PC-9 (cell line): ENCODE measurements at regions of chr15 and their contacts with region 1.

Region 1: GRCh38 chr15:25611603-25612002 is 172.8 kb upstream of the UBE3A start:
- DNase-seq: no peak
- H3K4me3 ChIP-seq: no peak overlapping the region
- H3K27ac ChIP-seq: no peak overlapping the region
- H3K4me1 ChIP-seq: no peaks in the 10 kb centered on the region
- H3K27me3 ChIP-seq: no peaks in the 10 kb centered on the region; the same call in 1 of the 2 replicates
- CTCF ChIP-seq: no peak

Region 2: DNA sequence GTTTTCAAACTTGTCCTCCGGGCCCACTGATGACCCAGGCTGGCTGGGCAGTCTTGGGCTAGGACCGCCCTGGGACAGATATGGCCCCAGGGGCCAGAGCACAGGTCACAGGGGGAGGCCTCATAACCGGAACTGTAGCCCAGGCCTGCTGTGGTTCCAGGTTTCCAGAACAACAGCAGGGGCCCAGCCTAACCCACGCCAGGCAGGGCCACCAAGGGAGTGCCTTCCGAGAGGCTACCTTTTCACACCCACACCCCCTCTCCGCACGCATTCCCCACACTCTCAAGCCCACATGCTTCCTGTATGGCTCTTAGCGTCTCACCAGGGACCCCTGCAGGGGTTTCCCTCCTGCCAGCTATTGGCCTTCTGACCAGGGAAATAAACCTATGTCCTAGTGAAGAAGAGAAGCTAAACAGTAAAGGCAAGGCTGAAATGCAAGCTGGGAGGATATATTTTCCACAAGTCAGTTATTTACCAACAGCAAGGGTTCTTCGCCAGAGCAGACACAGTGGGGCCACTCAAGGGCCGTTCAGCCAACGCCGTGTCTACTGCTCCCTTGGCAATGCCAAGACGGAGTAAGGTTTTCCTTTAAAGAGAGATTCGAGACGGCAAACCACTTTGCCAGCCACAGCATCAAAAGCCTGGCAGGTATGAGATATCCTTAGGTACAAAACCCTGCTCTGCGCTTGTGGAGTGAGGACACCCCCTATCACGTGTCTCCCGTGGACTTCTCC is 116.4 kb after region 1 on chr15:
- CTCF ChIA-PET with region 1: no interaction called
- POLR2A ChIA-PET with region 1: interaction called, 11 read pairs
- intact Hi-C with region 1: no loop called
- DNase-seq: no peak
- H3K4me3 ChIP-seq: no peak overlapping the region
- H3K27ac ChIP-seq: no peak overlapping the region
- H3K4me1 ChIP-seq: no peaks in the 10 kb centered on the region
- H3K27me3 ChIP-seq: peaks cover 33% of the 10 kb centered on the region
- CTCF ChIP-seq: no peak

Region 3: GRCh38 chr15:25859838-25860645 is 248.4 kb after region 1 on chr15:
- CTCF ChIA-PET with region 1: no interaction called
- POLR2A ChIA-PET with region 1: no interaction called
- intact Hi-C with region 1: no loop called
- DNase-seq: no peak
- H3K4me3 ChIP-seq: no peak overlapping the region
- H3K27ac ChIP-seq: no peak overlapping the region
- H3K4me1 ChIP-seq: no peaks in the 10 kb centered on the region
- H3K27me3 ChIP-seq: 0 out of 2 replicates have a peak, but pooled peaks cover 6% of the 10 kb centered on the region
- CTCF ChIP-seq: no peak

Region 4: DNA sequence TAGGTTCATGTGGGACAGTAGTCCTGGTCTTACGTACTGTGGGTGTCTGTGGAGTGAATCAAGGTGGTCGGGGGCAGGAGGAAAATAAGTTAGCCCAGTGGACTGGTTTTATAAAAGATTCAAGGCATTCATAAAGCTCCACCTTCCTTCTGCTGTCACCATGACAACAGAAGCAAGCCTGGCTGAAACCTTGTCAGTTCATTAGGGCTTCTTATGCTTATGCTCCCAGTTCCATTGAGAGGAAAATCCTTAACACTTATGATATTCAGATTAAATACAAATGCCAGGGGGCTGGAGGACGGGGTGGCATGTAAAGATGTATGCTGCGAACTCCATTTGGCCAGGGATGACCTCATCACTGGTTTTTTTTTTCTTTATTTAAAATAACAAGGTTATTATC is 534.6 kb after region 1 on chr15:
- CTCF ChIA-PET with region 1: no interaction called
- POLR2A ChIA-PET with region 1: no interaction called
- intact Hi-C with region 1: no loop called
- DNase-seq: no peak
- H3K4me3 ChIP-seq: no peak overlapping the region
- H3K27ac ChIP-seq: no peak overlapping the region
- H3K4me1 ChIP-seq: no peaks in the 10 kb centered on the region
- H3K27me3 ChIP-seq: no peaks in the 10 kb centered on the region
- CTCF ChIP-seq: no peak